Activated T-helper 2 cell treated with anti-CD3 and anti-CD28 coated beads, Interferon-gamma antibody, Interleukin-2, Interleukin-4, amounts not matched to agents 10 μg/mL and 5 μg/mL and 100 μg/mL, durations not matched to agents 14 hours and 24 hours and 36 hours (primary cell): ENCODE measurements at regions of chr3 and their contacts with region 1.

Region 1: DNA sequence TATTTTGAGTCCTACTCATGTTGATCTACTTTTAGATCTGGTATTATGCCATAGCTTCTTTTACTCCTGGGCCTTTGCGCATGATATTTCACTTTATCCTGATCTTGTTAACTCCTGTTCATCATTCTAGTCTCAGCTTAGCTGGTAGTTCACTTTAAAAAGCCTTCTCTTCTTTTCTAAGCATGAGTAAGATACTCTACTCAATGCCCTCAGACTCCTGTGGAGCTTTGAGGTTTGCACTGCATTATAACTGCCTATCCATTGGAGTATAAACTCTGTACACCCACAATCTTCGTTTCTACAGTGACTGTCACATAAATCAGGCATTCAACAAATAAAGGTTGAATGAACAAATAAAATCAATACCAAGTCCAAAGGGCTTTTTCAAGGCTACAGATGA is 357.9 kb upstream of the KCNH8 start:
- DNase-seq: no peak
- H3K4me3 Mint-ChIP-seq: no peak overlapping the region
- H3K27ac Mint-ChIP-seq: no peak overlapping the region
- H3K4me1 Mint-ChIP-seq: peaks cover 6% of the 10 kb centered on the region
- H3K27me3 Mint-ChIP-seq: no peaks in the 10 kb centered on the region

Region 2: DNA sequence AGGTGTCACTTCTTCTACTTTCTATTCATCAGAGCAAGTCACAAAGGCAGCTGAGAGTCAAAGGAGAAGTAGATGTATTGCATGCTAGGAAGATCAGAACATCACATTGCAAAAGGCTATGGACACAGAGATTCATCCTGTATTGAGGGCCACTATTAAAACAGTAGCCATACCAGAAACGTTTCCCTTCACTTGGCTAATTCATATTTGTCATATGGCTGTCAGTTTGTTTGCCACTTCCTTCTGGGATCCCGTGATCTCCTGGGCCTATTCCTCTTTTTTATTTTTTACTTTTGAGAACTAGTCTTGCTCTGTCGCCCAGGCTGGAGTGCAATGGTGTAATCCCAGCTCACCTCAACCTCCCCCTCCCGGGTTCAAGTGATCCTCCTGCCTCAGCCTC is 181.2 kb before region 1 on chr3:
- intact Hi-C with region 1: no loop called
- DNase-seq: no peak
- H3K4me3 Mint-ChIP-seq: no peak overlapping the region
- H3K27ac Mint-ChIP-seq: no peak overlapping the region
- H3K4me1 Mint-ChIP-seq: peaks cover 6% of the 10 kb centered on the region
- H3K27me3 Mint-ChIP-seq: no peaks in the 10 kb centered on the region

Region 3: DNA sequence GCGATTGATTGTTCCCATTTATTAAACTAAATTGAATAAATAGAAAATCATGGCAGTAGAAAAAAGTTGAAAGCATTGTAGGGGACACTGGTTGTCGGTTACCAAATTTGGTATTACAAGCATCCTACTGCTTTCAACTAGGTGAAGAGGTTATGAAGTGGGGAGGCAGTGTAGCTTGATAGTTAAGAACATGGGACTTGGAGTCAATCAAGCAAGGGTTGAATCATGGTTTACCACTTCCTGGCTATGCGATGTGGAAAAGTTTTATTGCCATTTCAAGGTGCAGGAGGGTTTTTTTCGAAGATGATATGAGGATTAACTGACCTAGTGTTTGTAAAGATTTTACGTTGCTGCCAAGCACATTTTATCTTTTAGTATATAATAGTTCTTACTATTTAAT is 39.7 kb after region 1 on chr3:
- intact Hi-C with region 1: loop called (anchors 2 kb)
- DNase-seq: no peak
- H3K4me3 Mint-ChIP-seq: no peak overlapping the region
- H3K27ac Mint-ChIP-seq: peak overlapping the region; percentile 35
- H3K4me1 Mint-ChIP-seq: peaks cover 22% of the 10 kb centered on the region
- H3K27me3 Mint-ChIP-seq: no peaks in the 10 kb centered on the region